ENCODE measurements at regions of chr1 and their contacts with region 1.

Region 1: DNA sequence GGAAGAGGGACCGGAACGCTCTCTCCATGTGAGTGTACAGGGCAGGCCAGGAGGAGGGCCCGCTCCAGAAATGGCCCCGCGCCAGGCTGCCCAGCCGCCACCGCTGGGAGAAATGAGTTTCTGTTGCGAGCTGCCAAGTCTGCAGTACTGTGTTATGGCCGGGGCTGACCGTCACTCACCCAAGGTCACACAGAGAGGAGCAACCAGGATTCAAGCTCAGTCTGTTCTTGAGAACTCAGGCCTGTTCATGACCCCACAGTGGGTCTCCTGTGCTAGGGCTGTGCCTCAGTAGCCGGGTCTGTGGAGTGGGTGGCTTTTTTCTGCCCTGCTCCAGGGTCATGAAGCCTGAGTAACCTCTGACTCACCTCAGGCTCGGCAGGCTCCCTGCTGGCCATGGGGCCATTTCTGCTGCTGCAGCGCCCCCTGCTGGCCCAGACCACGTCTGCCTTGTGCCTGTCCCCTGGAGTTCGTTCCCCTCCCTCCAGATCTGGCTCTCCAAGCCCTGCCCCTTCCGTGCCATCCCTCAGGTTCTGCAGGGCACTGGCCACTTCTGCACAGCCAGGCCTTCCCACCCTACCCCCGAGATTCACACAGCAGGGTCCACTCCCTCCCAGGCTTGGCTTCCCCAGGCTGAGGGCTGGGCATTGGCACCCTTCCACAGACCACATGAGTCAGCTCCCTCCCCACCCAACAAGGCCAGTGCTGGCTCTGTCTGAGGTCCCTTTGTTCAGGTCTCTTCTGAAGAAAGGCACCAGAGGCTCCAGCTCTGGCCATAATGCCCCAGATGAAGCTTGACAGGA is 51.8 kb downstream of the EDN2 start:
- DNase-seq: peak; percentile 96
- H3K4me3 Mint-ChIP-seq: peak overlapping the region; percentile 50
- H3K27ac Mint-ChIP-seq: peak overlapping the region; percentile 65
- H3K4me1 Mint-ChIP-seq: peaks cover 34% of the 10 kb centered on the region
- H3K27me3 Mint-ChIP-seq: peaks cover 14% of the 10 kb centered on the region
- CTCF ChIP-seq: peak; percentile 97

Region 2: GRCh38 chr1:41282679-41283317 is 149.9 kb before region 1 on chr1:
- CTCF ChIA-PET with region 1: interaction called, 13 read pairs
- intact Hi-C with region 1: loop called (anchors 5 kb)
- DNase-seq: peak; percentile 65
- H3K4me3 Mint-ChIP-seq: no peak overlapping the region
- H3K27ac Mint-ChIP-seq: no peak overlapping the region
- H3K4me1 Mint-ChIP-seq: peaks cover 9% of the 10 kb centered on the region
- H3K27me3 Mint-ChIP-seq: peaks cover 100% of the 10 kb centered on the region
- CTCF ChIP-seq: peak; percentile 89

Region 3: GRCh38 chr1:41322835-41323627 is 109.7 kb before region 1 on chr1:
- CTCF ChIA-PET with region 1: interaction called, 11 read pairs
- intact Hi-C with region 1: loop called (anchors 1 kb)
- DNase-seq: peak; percentile 77
- H3K4me3 Mint-ChIP-seq: no peak overlapping the region
- H3K27ac Mint-ChIP-seq: no peak overlapping the region
- H3K4me1 Mint-ChIP-seq: no peaks in the 10 kb centered on the region
- H3K27me3 Mint-ChIP-seq: peaks cover 16% of the 10 kb centered on the region
- CTCF ChIP-seq: peak; percentile 63

Region 4: GRCh38 chr1:41416552-41417334 is 15.9 kb before region 1 on chr1:
- CTCF ChIA-PET with region 1: interaction called, 21 read pairs
- intact Hi-C with region 1: no loop called
- DNase-seq: peak; percentile 86
- H3K4me3 Mint-ChIP-seq: no peak overlapping the region
- H3K27ac Mint-ChIP-seq: no peak overlapping the region
- H3K4me1 Mint-ChIP-seq: peaks cover 33% of the 10 kb centered on the region
- H3K27me3 Mint-ChIP-seq: peaks cover 22% of the 10 kb centered on the region
- CTCF ChIP-seq: peak; percentile 85

Region 5: GRCh38 chr1:41484372-41485241 is 51.9 kb after region 1 on chr1 and contains the start of gene EDN2:
- CTCF ChIA-PET with region 1: interaction called, 20 read pairs
- intact Hi-C with region 1: no loop called
- DNase-seq: peak; percentile 76
- H3K4me3 Mint-ChIP-seq: peak within 1 kb of the TSS; percentile 53
- H3K27ac Mint-ChIP-seq: no peak within 1 kb of the TSS
- H3K4me1 Mint-ChIP-seq: peaks cover 44% of the 10 kb centered on the region
- H3K27me3 Mint-ChIP-seq: peaks cover 6% of the 10 kb centered on the region
- CTCF ChIP-seq: peak; percentile 51
- total RNA-seq, gene EDN2: 0.28 TPM in 1 of 2 replicates, not detected in the other

Region 6: GRCh38 chr1:41516168-41517061 is 83.7 kb after region 1 on chr1:
- CTCF ChIA-PET with region 1: interaction called, 27 read pairs
- intact Hi-C with region 1: no loop called
- DNase-seq: peak; percentile 94
- H3K4me3 Mint-ChIP-seq: peak overlapping the region; percentile 69
- H3K27ac Mint-ChIP-seq: peak overlapping the region; percentile 79
- H3K4me1 Mint-ChIP-seq: peaks cover 35% of the 10 kb centered on the region
- H3K27me3 Mint-ChIP-seq: peaks cover 16% of the 10 kb centered on the region
- CTCF ChIP-seq: peak; percentile 81

Measured in Calu3 (cell line).